ENCODE measurements at regions of chrX and their contacts with region 1.

Region 1: GRCh38 chrX:17689971-17690409 is 47.3 kb upstream of the SCML1 start:
- DNase-seq: no peak
- H3K4me3 ChIP-seq: no peak overlapping the region
- H3K27ac ChIP-seq: no peak overlapping the region
- H3K4me1 ChIP-seq: peaks cover 0 to 4% (median 2%) of the 10 kb centered on the region in 4 donors
- H3K27me3 ChIP-seq: no peaks in the 10 kb centered on the region
- CTCF ChIP-seq: peak; percentile 67 to 70 (median 68)
- EP300 ChIP-seq: no peak
- POLR2A ChIP-seq: no peak

Region 2: GRCh38 chrX:16826207-16826606 is 863.8 kb before region 1 on chrX:
- intact Hi-C with region 1: loop called (anchors 10 kb)
- DNase-seq: no peak
- H3K4me3 ChIP-seq: no peak overlapping the region
- H3K27ac ChIP-seq: peak overlapping the region in 3 of 4 donors; percentile 15 to 79 (median 71)
- H3K4me1 ChIP-seq: peaks cover 0 to 27% (median 17%) of the 10 kb centered on the region in 4 donors
- H3K27me3 ChIP-seq: no peaks in the 10 kb centered on the region
- CTCF ChIP-seq: peak; percentile 43 to 55 (median 52)
- EP300 ChIP-seq: no peak
- POLR2A ChIP-seq: no peak

Region 3: GRCh38 chrX:16993791-16994318 is 696.1 kb before region 1 on chrX:
- intact Hi-C with region 1: no loop called
- DNase-seq: no peak
- H3K4me3 ChIP-seq: no peak overlapping the region
- H3K27ac ChIP-seq: no peak overlapping the region
- H3K4me1 ChIP-seq: peaks cover 0 to 18% (median 6%) of the 10 kb centered on the region in 4 donors
- H3K27me3 ChIP-seq: no peaks in the 10 kb centered on the region
- CTCF ChIP-seq: no peak
- EP300 ChIP-seq: no peak
- POLR2A ChIP-seq: no peak

Region 4: GRCh38 chrX:17242470-17242869 is 447.5 kb before region 1 on chrX:
- intact Hi-C with region 1: loop called (anchors 2 kb)
- DNase-seq: no peak
- H3K4me3 ChIP-seq: no peak overlapping the region
- H3K27ac ChIP-seq: no peak overlapping the region
- H3K4me1 ChIP-seq: no peaks in the 10 kb centered on the region
- H3K27me3 ChIP-seq: no peaks in the 10 kb centered on the region
- CTCF ChIP-seq: peak; percentile 69 to 75 (median 74)
- EP300 ChIP-seq: no peak
- POLR2A ChIP-seq: no peak

Region 5: DNA sequence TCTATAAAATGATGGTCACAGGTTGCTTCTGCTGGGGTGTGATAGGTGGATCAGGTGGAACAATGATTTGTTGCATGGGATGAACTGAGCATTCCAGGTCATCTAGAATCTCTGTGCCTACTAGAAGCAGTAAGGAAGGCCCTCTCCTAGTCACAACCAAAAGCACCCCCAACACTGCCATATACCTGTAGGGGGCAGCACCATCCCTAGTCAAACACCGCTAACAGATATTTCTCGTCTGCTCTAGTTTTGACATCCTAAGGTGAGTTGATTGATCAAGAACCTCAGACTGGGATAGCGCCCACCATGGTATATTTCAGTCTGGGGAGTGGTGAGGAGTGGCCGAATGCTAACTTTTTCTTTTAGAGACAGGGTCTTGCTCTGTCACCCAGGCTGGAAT is 154.8 kb before region 1 on chrX:
- intact Hi-C with region 1: loop called (anchors 10 kb)
- DNase-seq: no peak
- H3K4me3 ChIP-seq: no peak overlapping the region
- H3K27ac ChIP-seq: no peak overlapping the region
- H3K4me1 ChIP-seq: no peaks in the 10 kb centered on the region
- H3K27me3 ChIP-seq: no peaks in the 10 kb centered on the region
- CTCF ChIP-seq: peak; percentile 22 to 47 (median 30)
- EP300 ChIP-seq: no peak
- POLR2A ChIP-seq: no peak